ENCODE measurements at regions of chr14 and their contacts with region 1.

Region 1: GRCh38 chr14:96304956-96305355 is 48.9 kb downstream of the BDKRB1 start:
- DNase-seq: peak; percentile 60

Region 2: GRCh38 chr14:96424109-96424989 is 119.4 kb after region 1 on chr14:
- in situ Hi-C with region 1: loop called (anchors 25 kb)
- DNase-seq: peak; percentile 85

Measured in SK-MEL-5 (cell line).